Tibial artery (tissue), 4 donors: ENCODE measurements at regions of chr12 and their contacts with region 1.

Region 1: GRCh38 chr12:45518291-45519235 is 210.9 kb upstream of the ARID2 start:
- DNase-seq: no peak
- H3K4me3 ChIP-seq: no peak overlapping the region
- H3K27ac ChIP-seq: no peak overlapping the region
- H3K4me1 ChIP-seq: no peaks in the 10 kb centered on the region
- H3K27me3 ChIP-seq: no peaks in the 10 kb centered on the region
- CTCF ChIP-seq: no peak

Region 2: GRCh38 chr12:45406988-45407872 is 111.3 kb before region 1 on chr12:
- intact Hi-C with region 1: no loop called
- DNase-seq: no peak
- H3K4me3 ChIP-seq: no peak overlapping the region
- H3K27ac ChIP-seq: no peak overlapping the region
- H3K4me1 ChIP-seq: no peaks in the 10 kb centered on the region
- H3K27me3 ChIP-seq: no peaks in the 10 kb centered on the region
- CTCF ChIP-seq: no peak

Region 3: DNA sequence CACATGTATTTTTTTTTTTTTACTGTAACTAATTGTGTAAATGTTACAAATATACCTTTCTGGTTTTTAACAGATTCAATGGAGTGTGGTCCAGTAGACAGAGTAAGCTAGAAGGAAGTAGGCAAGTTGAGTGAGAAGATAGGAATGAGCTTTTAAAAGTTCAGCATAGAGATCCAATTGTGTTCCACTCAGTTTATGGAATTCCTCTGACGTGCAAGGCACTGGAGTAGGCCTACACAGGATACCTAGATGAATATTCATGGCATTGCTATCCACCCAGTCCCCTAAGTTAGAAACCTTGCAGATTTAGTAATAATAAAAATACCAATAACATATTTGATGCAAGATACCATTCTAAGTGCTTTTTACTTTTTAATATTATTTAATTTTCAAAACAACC is 14.7 kb before region 1 on chr12:
- intact Hi-C with region 1: loop called (anchors 2 kb)
- DNase-seq: no peak
- H3K4me3 ChIP-seq: no peak overlapping the region
- H3K27ac ChIP-seq: no peak overlapping the region
- H3K4me1 ChIP-seq: no peaks in the 10 kb centered on the region
- H3K27me3 ChIP-seq: no peaks in the 10 kb centered on the region
- CTCF ChIP-seq: no peak